Tibial artery (tissue), 4 donors: ENCODE measurements at regions of chr3 and their contacts with region 1.

Region 1: DNA sequence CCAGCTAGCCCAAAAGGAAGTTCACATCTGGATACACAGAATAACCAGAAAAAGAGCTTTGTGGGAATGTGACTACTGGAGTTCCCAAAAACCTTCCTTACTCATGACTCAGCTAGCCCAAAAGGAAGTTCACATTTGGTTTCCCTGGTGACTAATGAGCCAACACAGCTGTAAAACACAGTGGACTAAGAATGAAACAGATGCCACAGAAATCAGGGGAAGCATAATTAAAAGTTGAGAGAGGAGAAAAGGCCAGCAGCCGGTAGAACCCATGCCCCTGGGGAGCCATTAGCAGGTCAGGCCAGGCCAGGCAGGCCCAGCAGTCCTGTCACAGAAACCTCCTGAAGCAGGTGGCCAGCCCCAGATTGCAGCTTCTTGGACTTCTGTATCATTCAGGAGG is 130.3 kb downstream of the GHSR start:
- DNase-seq: peak in 1 of 2 donors; percentile 52
- H3K4me3 ChIP-seq: no peak overlapping the region
- H3K27ac ChIP-seq: peak overlapping the region; percentile 74 to 79
- H3K4me1 ChIP-seq: peaks cover 0 to 92% (median 70%) of the 10 kb centered on the region in 4 donors
- H3K27me3 ChIP-seq: no peaks in the 10 kb centered on the region
- CTCF ChIP-seq: no peak

Region 2: DNA sequence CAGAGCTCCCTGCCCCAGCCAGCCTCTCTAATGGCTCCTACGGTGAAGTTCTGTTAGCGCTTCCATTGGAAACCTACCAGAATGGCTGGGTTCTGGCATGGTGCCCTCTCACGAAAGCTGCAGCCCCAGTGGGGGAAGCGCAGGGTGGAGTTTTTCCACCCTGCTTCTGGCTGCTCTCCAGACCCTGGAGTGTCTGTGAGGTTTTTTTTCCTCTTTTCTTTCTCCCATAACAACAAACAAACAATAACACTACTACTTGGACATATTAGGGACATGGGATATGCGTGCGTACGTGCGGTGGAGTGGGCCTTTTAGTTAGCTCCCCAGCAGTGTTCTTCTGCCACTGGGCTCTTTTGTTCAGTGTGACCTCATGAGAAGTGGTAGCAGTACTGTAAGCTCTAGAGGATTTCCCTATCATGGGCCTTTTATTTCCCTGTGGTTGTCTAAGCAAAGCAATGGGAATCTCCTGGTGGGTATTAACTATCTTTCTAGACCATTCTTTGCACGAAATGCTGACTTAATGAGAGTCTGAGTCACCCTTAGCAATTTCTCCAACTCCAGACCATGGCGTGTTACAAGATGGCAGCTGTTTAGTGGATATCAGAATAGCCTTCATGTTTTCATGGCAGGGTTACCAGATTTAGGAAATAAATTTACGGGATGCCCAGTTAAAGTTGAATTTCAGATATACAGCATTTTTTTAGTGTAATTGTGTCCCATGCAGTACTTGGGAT is 116.7 kb before region 1 on chr3:
- intact Hi-C with region 1: loop called (anchors 10 kb)
- DNase-seq: peak; percentile 68 to 85
- H3K4me3 ChIP-seq: no peak overlapping the region
- H3K27ac ChIP-seq: peak overlapping the region; percentile 61 to 69
- H3K4me1 ChIP-seq: peaks cover 0 to 64% (median 40%) of the 10 kb centered on the region in 4 donors
- H3K27me3 ChIP-seq: no peaks in the 10 kb centered on the region
- CTCF ChIP-seq: no peak

Region 3: DNA sequence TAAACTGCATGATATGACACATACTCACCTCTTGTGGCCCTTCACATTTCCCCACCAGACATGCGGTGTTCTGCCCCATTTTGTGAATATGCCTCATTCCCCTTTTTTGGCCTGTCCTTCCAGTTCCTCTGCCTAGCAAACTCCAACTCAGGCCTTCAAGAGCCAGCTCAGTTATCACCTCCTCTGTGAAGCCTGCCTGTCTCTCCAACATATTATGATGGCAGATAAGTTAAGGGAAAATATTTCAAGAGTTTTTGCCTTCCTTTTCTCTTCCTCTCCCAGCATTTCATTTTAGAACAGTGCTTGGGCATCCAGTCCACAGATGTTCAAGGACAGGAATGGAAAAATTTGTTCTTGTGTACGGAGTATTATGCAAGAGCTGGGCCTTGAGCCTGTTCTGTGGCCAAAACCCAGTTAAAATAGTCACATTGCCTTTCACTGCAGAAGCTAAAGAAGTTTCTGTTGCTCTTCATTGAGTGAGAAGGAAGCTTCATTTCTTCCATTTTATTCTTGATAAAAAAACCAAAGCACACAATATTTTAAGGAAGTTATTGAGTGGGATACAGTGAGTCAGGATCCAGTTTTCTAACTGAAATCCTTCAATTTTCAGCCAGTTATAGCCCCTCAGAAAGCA is 61.8 kb before region 1 on chr3:
- intact Hi-C with region 1: loop called (anchors 5 kb)
- DNase-seq: peak; percentile 77 to 78
- H3K4me3 ChIP-seq: no peak overlapping the region
- H3K27ac ChIP-seq: peak overlapping the region; percentile 69 to 81
- H3K4me1 ChIP-seq: peaks cover 0 to 76% (median 60%) of the 10 kb centered on the region in 4 donors
- H3K27me3 ChIP-seq: no peaks in the 10 kb centered on the region
- CTCF ChIP-seq: no peak

Region 4: GRCh38 chr3:173529067-173529711 is 1211.2 kb after region 1 on chr3:
- intact Hi-C with region 1: no loop called
- DNase-seq: no peak
- H3K4me3 ChIP-seq: no peak overlapping the region
- H3K27ac ChIP-seq: no peak overlapping the region
- H3K4me1 ChIP-seq: no peaks in the 10 kb centered on the region
- H3K27me3 ChIP-seq: no peaks in the 10 kb centered on the region
- CTCF ChIP-seq: no peak